ENCODE measurements at regions of chr4 and their contacts with region 1.

Region 1: DNA sequence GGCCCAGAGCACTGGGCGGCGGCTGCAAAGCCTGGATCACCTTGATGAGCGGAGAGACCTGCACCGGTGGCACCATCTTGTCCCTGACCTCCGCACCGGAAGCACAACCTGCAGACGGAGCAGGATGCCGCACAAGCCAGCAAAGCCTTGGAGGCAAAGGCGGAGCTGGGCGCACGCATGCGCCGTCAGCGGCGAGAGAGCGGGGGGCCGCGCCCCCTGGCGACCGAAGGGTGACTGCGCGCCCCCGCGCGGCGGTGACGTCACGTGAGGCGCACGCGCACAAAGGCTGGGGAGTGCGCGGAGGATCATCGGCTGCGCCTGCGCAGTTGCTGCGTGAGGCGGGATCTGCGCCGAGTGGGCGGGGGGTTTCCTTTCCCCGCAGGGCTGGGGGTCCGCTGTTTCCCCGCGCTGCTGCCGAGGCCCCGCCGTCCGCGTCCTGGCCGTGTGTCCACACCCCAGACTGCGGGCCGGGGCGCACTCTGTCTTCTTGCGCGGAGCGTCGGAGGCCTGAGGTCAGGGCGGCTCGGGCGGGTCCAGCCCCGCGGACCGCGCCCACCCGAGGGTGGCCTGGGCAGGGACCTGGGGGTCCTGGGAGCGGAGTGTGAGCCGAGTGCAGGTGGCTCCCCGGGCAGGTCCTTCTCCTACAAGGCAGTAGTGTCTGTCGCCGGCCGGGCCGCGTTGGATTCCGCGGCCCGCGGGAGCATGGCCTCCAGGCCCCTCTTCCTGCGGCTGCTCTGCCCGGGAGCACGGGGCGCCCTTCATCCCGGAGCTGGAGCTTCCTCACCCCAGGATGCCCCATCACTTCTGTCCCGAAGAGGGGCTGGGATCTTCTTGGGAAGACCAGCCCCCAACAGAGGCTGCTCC is at the starts of genes ATP5ME and MYL5:
- DNase-seq: peak; percentile 92 to 98
- H3K4me3 ChIP-seq: peak within 1 kb of the TSS; percentile 68 to 92
- H3K27ac ChIP-seq: peak within 1 kb of the TSS; percentile 92
- H3K4me1 ChIP-seq: peaks cover 9 to 15% of the 10 kb centered on the region in 2 donors
- H3K27me3 ChIP-seq: no peaks in the 10 kb centered on the region
- CTCF ChIP-seq: peak; percentile 76 to 85 (median 85)
- total RNA-seq, gene ATP5ME: not detected
- total RNA-seq, gene MYL5: 1.1 TPM

Region 2: DNA sequence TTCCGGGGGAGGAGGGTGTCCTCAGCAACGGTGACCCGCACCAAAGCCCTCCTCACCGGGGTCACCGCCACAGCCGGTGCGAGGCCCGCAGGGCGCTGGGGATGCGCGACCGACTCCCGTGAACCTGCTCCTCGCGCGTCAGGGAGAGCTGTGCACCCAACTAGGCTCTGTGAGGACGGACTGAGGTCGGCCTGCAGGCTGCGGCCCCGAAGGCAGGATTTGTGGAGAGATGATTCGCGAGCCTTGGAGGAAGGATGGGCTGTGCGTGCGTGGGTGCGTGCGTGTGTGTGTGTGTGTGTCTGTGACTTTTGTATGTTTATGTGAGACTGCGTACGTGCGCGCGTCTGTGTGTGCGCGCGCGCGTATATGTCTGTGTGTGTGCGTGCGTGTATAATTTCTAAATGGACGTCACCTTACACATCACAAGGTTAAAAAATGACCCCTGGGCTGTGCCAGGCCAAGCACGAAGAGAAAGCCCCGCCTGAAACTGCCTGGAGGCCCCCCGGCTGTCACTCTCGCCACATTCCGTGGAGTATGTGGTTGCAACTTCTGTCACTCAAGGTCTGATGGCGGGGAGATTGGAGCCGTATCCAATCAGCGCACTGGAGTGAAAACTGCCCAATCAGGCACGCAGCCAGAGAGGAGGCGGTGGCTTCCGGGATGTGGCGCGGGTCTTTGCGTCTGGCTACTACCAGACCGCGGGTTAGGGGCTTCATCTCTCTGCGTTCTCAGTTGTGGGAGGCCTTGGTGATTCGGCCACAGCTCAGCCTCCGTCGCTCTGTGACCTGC is 337.1 kb before region 1 on chr4 and contains the start of gene ZNF141:
- intact Hi-C with region 1: loop called (anchors 5 kb)
- DNase-seq: peak; percentile 92 to 98
- H3K4me3 ChIP-seq: peak within 1 kb of the TSS; percentile 84 to 100
- H3K27ac ChIP-seq: peak within 1 kb of the TSS; percentile 94 to 95
- H3K4me1 ChIP-seq: peaks cover 0 to 14% of the 10 kb centered on the region in 2 donors
- H3K27me3 ChIP-seq: no peaks in the 10 kb centered on the region
- CTCF ChIP-seq: no peak
- total RNA-seq, gene ZNF141: 2.9 TPM

Region 3: GRCh38 chr4:498328-498904 is 176.0 kb before region 1 on chr4:
- intact Hi-C with region 1: loop called (anchors 1 kb)
- DNase-seq: no peak
- H3K4me3 ChIP-seq: peak overlapping the region; percentile 72 to 87
- H3K27ac ChIP-seq: peak overlapping the region; percentile 62 to 92
- H3K4me1 ChIP-seq: peaks cover 6 to 9% of the 10 kb centered on the region in 2 donors
- H3K27me3 ChIP-seq: no peaks in the 10 kb centered on the region
- CTCF ChIP-seq: no peak

Region 4: GRCh38 chr4:650951-651883 is 23.2 kb before region 1 on chr4:
- intact Hi-C with region 1: no loop called
- DNase-seq: no peak
- H3K4me3 ChIP-seq: no peak overlapping the region
- H3K27ac ChIP-seq: no peak overlapping the region
- H3K4me1 ChIP-seq: no peaks in the 10 kb centered on the region
- H3K27me3 ChIP-seq: no peaks in the 10 kb centered on the region
- CTCF ChIP-seq: no peak

Region 5: DNA sequence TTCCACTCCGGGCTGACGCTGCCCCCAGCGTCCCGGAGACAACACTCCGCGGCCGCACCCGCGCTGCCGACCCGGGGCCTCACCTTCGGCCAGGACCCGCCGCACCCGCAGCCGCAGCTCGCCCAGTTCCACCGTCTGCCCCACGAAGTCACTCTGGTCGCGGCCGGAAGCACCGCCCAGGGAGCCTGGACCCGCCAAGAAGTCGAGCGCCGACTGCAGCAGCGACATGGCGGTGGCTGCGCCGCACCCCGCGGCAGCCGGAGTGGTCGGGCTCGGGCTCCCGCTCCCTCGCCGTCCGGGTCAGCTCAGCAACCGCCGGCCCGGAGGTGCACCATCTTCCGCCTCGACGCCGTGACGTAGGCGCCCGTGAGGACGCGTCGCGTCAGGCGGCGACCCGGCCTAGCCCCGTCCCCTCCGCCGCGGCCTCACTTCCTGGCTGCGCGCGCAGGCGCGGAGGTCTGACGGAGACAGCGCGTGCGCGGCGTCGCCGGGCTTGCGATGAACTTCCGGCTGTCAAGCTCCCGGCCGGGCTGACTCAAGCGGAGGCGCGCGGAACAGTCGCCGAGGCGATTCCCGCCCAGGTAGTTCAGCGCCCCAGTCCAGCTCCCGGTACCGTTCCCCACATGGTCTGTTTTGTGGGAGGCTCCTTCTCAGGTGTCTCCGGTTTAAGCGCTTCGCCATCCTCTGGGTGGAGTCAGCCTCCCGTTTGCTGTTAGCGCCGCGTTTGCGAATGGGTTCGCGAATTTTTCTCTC is 257.7 kb after region 1 on chr4 and contains the starts of genes GAK and TMEM175:
- intact Hi-C with region 1: loop called (anchors 2 kb)
- DNase-seq: peak; percentile 80 to 98
- H3K4me3 ChIP-seq: peak within 1 kb of the TSS; percentile 76 to 82
- H3K27ac ChIP-seq: peak within 1 kb of the TSS; percentile 88
- H3K4me1 ChIP-seq: peaks cover 11 to 26% of the 10 kb centered on the region in 2 donors
- H3K27me3 ChIP-seq: no peaks in the 10 kb centered on the region
- CTCF ChIP-seq: peak in 1 of 3 experiments; percentile 2
- total RNA-seq, gene GAK: 87.3 TPM
- total RNA-seq, gene TMEM175: 41.2 TPM

Region 6: DNA sequence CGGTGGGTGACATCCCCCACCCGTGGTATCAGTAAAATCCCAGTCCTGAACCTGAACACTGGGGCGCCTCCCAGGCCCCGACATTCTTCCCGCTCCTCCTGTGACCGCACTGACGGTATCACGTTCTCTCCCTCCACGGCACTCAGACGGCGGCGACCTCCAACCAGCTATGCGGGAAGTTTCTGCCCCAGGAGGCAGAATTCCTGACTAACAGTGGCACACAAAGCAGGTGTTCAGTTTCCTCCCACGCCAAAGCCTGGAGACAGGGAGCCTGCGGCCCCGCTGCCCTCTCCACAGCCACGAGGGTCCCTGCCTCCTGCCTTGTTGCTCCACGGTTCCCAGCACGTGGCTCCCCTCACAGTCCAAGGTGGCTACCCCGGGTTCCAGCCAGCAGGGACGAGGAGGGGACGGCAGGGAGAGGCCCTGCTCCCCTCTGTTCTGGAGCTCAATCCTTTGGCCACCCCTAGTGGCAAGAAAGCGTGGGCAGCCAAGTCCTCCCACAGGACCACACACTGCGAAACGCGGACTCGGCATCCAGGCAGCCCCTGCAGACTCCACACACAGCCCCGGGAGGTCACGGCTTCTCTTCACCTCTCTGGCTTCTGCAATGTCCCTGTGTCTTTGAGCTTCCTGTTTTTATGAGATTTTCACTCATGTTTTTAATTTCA is 559.4 kb after region 1 on chr4:
- intact Hi-C with region 1: no loop called
- DNase-seq: no peak
- H3K4me3 ChIP-seq: no peak overlapping the region
- H3K27ac ChIP-seq: peak overlapping the region in 1 of 2 donors; percentile 25
- H3K4me1 ChIP-seq: no peaks in the 10 kb centered on the region
- H3K27me3 ChIP-seq: no peaks in the 10 kb centered on the region
- CTCF ChIP-seq: peak in 1 of 3 experiments; percentile 4